ENCODE measurements at regions of chr6 and their contacts with region 1.

Region 1: GRCh38 chr6:42043787-42044475 is 6.4 kb upstream of the TAF8 start:
- DNase-seq: peak; percentile 96
- ATAC-seq: peak; percentile 48
- H3K4me3 Mint-ChIP-seq: peak overlapping the region; percentile 75
- H3K27ac Mint-ChIP-seq: peak overlapping the region; percentile 92
- H3K4me1 Mint-ChIP-seq: peaks cover 89% of the 10 kb centered on the region
- H3K27me3 Mint-ChIP-seq: no peaks in the 10 kb centered on the region

Region 2: DNA sequence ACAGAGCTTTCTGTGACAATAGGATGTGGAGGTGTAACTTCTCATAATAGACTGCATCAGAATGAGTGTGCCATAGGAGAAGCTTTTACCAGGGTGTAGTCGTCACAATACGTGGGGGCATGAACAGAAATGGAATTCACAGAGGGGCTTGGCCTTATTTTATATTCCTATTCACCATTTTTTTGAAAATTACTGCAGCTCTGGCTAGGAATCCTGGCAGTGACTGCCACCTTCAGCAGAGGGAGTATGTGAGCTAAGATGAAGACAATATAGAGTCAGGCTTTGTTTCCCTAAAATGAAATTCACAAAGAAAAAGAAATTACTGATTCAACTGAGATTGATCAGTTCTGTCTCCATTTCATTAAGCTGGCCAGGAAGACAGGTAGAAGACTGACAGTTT is 242.6 kb before region 1 on chr6:
- CTCF ChIA-PET with region 1: interaction called, 39 read pairs
- POLR2A ChIA-PET with region 1: no interaction called
- DNase-seq: no peak
- ATAC-seq: no peak
- H3K4me3 Mint-ChIP-seq: no peak overlapping the region
- H3K27ac Mint-ChIP-seq: no peak overlapping the region
- H3K4me1 Mint-ChIP-seq: peaks cover 2% of the 10 kb centered on the region
- H3K27me3 Mint-ChIP-seq: no peaks in the 10 kb centered on the region

Region 3: GRCh38 chr6:41901882-41902519 is 141.9 kb before region 1 on chr6:
- CTCF ChIA-PET with region 1: interaction called, 44 read pairs
- POLR2A ChIA-PET with region 1: interaction called, 3 read pairs
- DNase-seq: peak; percentile 72
- ATAC-seq: peak; percentile 73
- H3K4me3 Mint-ChIP-seq: no peak overlapping the region
- H3K27ac Mint-ChIP-seq: no peak overlapping the region
- H3K4me1 Mint-ChIP-seq: peaks cover 24% of the 10 kb centered on the region
- H3K27me3 Mint-ChIP-seq: no peaks in the 10 kb centered on the region

Region 4: DNA sequence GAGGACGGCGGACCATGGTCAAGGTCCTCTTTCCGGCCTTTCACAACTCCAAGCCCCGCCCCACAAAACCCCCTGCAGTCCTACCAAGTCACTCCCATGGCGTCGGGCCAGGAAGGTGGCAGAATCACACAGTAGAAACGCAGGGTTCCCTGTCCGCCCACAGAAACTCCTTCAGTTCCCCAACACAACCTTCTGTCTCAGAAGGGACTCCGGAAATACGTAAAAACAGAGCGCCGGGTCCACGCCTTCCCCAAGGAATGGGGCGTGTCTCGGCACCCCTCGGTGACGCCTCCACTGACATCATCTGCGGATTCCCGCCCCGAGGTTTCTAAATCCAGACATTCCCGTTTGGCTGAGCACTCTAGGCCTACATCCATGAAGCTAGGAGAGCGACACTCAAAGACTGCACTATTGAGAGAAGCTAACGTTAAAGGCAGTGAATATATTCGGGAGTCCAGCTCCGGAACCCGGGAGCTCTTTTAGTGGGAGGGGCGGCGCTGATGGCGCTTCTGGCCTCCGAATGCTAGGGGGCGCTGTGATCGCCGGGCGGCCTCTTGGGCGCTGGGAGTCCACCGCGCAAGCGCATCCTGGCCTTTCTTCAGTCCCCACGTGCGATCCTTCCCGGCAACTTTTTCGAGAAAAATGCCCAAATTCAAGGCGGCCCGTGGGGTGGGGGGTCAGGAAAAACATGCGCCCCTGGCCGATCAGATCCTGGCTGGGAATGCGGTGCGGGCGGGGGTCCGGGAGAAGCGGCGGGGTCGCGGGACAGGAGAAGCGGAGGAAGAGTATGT is 122.8 kb before region 1 on chr6 and contains the starts of genes BYSL and MED20:
- CTCF ChIA-PET with region 1: interaction called, 232 read pairs
- POLR2A ChIA-PET with region 1: interaction called, 18 read pairs
- DNase-seq: peak; percentile 95
- ATAC-seq: peak; percentile 90
- H3K4me3 Mint-ChIP-seq: peak within 1 kb of the TSS; percentile 98
- H3K27ac Mint-ChIP-seq: peak within 1 kb of the TSS; percentile 98
- H3K4me1 Mint-ChIP-seq: peaks cover 52% of the 10 kb centered on the region
- H3K27me3 Mint-ChIP-seq: no peaks in the 10 kb centered on the region
- total RNA-seq, gene BYSL: 39.4 to 43.1 TPM
- total RNA-seq, gene MED20: 20.6 to 22.3 TPM

Region 5: DNA sequence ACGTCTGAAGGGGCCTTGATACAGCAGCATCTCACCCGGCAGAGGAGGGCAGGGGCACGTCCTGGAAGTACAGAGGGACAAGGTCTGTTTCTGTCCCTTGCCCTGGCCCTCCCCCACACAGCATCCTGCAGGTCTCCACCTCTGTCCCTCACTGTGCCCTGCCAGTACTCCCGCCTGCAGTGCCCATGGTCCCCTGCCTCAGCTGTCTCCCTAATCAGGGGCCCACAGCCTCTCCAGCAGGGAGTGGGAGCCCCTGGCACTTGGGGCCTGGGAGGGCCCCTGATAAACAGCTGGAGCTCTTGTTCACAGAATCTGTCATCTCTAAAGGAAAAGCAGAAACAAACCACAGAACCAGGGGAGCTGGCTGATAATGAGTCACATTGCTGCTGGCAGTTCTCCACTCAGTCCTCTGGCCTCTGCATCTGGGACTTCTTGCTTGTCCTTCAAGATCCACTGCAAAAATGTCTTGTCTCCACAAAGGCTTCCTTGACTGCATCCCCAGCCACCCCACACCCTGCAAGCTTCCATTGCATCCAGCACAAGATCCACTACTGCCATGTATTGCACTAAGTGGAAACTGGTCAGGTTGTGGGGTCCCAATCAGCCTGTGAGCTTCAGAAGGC is 26.8 kb before region 1 on chr6:
- CTCF ChIA-PET with region 1: interaction called, 49 read pairs
- POLR2A ChIA-PET with region 1: interaction called, 31 read pairs
- DNase-seq: peak; percentile 62
- ATAC-seq: peak; percentile 73
- H3K4me3 Mint-ChIP-seq: peak overlapping the region; percentile 50
- H3K27ac Mint-ChIP-seq: peak overlapping the region; percentile 93
- H3K4me1 Mint-ChIP-seq: peaks cover 78% of the 10 kb centered on the region
- H3K27me3 Mint-ChIP-seq: no peaks in the 10 kb centered on the region

Region 6: GRCh38 chr6:42104095-42104806 is 60.3 kb after region 1 on chr6:
- CTCF ChIA-PET with region 1: interaction called, 17 read pairs
- POLR2A ChIA-PET with region 1: interaction called, 3 read pairs
- DNase-seq: peak; percentile 82
- ATAC-seq: peak; percentile 94
- H3K4me3 Mint-ChIP-seq: peak overlapping the region; percentile 65
- H3K27ac Mint-ChIP-seq: peak overlapping the region; percentile 74
- H3K4me1 Mint-ChIP-seq: peaks cover 30% of the 10 kb centered on the region
- H3K27me3 Mint-ChIP-seq: peaks cover 2% of the 10 kb centered on the region

Region 7: GRCh38 chr6:42122718-42123151 is 78.8 kb after region 1 on chr6:
- CTCF ChIA-PET with region 1: no interaction called
- POLR2A ChIA-PET with region 1: no interaction called
- DNase-seq: no peak
- ATAC-seq: no peak
- H3K4me3 Mint-ChIP-seq: no peak overlapping the region
- H3K27ac Mint-ChIP-seq: no peak overlapping the region
- H3K4me1 Mint-ChIP-seq: no peaks in the 10 kb centered on the region
- H3K27me3 Mint-ChIP-seq: no peaks in the 10 kb centered on the region